Activated CD4-positive, alpha-beta memory T cell treated with anti-CD3 and anti-CD28 coated beads for 36 hours (primary cell): ENCODE measurements at regions of chr19 and their contacts with region 1.

Region 1: GRCh38 chr19:588093-588740 is 1.5 kb upstream of the HCN2 start:
- DNase-seq: peak; percentile 83
- H3K4me3 Mint-ChIP-seq: peak overlapping the region; percentile 21
- H3K27ac Mint-ChIP-seq: no peak overlapping the region
- H3K4me1 Mint-ChIP-seq: peaks cover 4% of the 10 kb centered on the region
- H3K27me3 Mint-ChIP-seq: peaks cover 10% of the 10 kb centered on the region

Region 2: GRCh38 chr19:572140-572742 is 16.0 kb before region 1 on chr19 and contains the start of gene BSG:
- CTCF ChIA-PET with region 1: interaction called, 18 read pairs
- POLR2A ChIA-PET with region 1: no interaction called
- intact Hi-C with region 1: no loop called
- DNase-seq: peak; percentile 99
- H3K4me3 Mint-ChIP-seq: peak within 1 kb of the TSS; percentile 92
- H3K27ac Mint-ChIP-seq: peak within 1 kb of the TSS; percentile 93
- H3K4me1 Mint-ChIP-seq: peaks cover 35% of the 10 kb centered on the region
- H3K27me3 Mint-ChIP-seq: no peaks in the 10 kb centered on the region
- total RNA-seq, gene BSG: 185 to 205 TPM

Region 3: GRCh38 chr19:610801-611505 is 22.7 kb after region 1 on chr19:
- CTCF ChIA-PET with region 1: interaction called, 6 read pairs
- POLR2A ChIA-PET with region 1: no interaction called
- intact Hi-C with region 1: loop called (anchors 2 kb)
- DNase-seq: peak; percentile 78
- H3K4me3 Mint-ChIP-seq: peak overlapping the region; percentile 79
- H3K27ac Mint-ChIP-seq: peak overlapping the region; percentile 95
- H3K4me1 Mint-ChIP-seq: peaks cover 26% of the 10 kb centered on the region
- H3K27me3 Mint-ChIP-seq: no peaks in the 10 kb centered on the region

Region 4: GRCh38 chr19:628159-628558 is 39.9 kb after region 1 on chr19:
- CTCF ChIA-PET with region 1: interaction called, 22 read pairs
- POLR2A ChIA-PET with region 1: interaction called, 3 read pairs
- intact Hi-C with region 1: loop called (anchors 10 kb)
- DNase-seq: peak; percentile 33
- H3K4me3 Mint-ChIP-seq: no peak overlapping the region
- H3K27ac Mint-ChIP-seq: no peak overlapping the region
- H3K4me1 Mint-ChIP-seq: peaks cover 25% of the 10 kb centered on the region
- H3K27me3 Mint-ChIP-seq: no peaks in the 10 kb centered on the region

Region 5: DNA sequence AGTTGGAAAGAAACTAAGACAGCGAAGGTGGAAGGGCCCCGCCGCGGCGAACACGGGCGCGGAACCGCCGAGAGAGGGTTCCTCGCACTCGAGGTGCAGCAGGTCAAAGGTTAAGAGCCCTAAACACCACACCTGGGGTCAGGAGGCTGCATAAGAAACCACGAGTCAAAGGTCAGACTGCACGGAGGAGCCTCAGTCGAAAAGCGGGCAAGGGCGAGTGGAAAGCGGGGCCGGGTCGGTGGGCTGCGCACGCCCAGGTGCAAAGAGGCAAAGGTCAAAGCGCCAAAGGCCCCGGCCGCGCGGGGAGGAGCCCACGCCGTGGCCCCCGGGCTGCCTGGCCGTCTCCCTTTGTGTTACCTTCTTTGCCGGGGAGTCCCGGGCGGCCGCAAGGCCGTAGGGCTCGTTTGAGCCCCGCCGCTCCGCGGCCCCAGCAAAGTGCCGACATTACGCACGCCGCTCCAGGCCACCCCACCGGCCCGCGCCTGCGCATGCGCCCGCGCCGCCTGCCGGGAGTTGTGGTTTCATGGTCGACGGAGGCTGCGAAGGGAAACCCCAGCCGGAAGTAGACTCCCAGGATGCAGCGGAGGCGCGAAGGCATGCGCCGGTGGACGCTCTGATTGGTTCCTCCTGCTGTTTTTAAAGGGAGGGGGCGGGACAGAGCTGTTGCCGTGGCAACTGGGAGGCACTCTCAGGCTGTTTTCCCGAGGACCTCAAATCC is 45.0 kb after region 1 on chr19 and contains the start of gene POLRMT:
- CTCF ChIA-PET with region 1: interaction called, 22 read pairs
- POLR2A ChIA-PET with region 1: interaction called, 3 read pairs
- intact Hi-C with region 1: loop called (anchors 10 kb)
- DNase-seq: peak; percentile 99
- H3K4me3 Mint-ChIP-seq: peak within 1 kb of the TSS; percentile 96
- H3K27ac Mint-ChIP-seq: peak within 1 kb of the TSS; percentile 84
- H3K4me1 Mint-ChIP-seq: peaks cover 33% of the 10 kb centered on the region
- H3K27me3 Mint-ChIP-seq: no peaks in the 10 kb centered on the region
- total RNA-seq, gene POLRMT: 71.5 to 72.5 TPM

Region 6: GRCh38 chr19:732148-733069 is 144.2 kb after region 1 on chr19:
- CTCF ChIA-PET with region 1: interaction called, 10 read pairs
- POLR2A ChIA-PET with region 1: no interaction called
- intact Hi-C with region 1: loop called (anchors 5 kb)
- DNase-seq: no peak
- H3K4me3 Mint-ChIP-seq: no peak overlapping the region
- H3K27ac Mint-ChIP-seq: no peak overlapping the region
- H3K4me1 Mint-ChIP-seq: peaks cover 4% of the 10 kb centered on the region
- H3K27me3 Mint-ChIP-seq: peaks cover 4% of the 10 kb centered on the region